ENCODE measurements at regions of chr2 and their contacts with region 1.

Region 1: GRCh38 chr2:19714926-19715325 is 186.9 kb downstream of the TTC32 start:
- DNase-seq: no peak
- ATAC-seq: no peak

Region 2: DNA sequence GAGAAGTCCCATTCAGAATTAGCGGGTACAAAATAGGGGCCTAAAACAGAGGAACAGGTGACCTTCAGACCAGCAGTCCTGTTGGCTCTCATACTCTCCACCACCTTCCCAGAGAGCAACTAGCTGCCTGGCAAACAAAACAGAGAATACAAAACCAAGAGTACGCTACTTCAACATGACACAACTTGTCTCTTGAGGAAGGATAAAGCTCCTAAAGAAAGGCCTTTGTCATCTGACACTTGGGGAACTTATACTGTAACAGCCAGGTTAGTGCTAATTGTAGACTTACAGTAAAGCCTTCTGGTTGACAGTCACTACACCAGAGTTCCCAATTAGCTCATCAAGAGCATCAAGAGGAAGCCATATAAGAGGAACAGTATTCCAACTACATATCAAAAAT is 843.5 kb before region 1 on chr2:
- intact Hi-C with region 1: loop called (anchors 5 kb)
- DNase-seq: no peak
- ATAC-seq: no peak

Region 3: DNA sequence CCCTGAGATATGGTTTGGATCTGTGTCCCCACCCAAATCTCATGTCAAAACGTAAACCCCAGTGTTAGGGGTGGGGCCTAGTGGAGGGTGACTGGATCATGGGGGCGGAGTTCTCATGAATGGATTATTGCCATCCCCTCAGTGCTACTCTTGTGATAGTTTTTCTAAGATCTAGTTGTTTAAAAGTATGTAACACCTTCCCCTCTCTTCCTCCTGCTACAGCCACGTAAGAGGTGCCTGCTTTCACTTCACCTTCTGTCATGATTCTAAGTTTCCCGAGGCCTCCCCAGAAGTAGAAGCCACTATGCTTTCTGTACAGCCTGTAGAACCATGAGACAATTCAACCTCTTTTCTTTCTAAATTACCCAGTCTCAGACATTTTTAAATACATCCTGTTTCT is 618.8 kb after region 1 on chr2:
- intact Hi-C with region 1: no loop called
- DNase-seq: no peak
- ATAC-seq: no peak

Measured in Right ventricle myocardium superior (tissue), 1 donor.